Activated CD4-positive, alpha-beta memory T cell treated with anti-CD3 and anti-CD28 coated beads, Interleukin-2, amount 10 ng/mL, durations not matched to agents 7 days and 5 days (primary cell): ENCODE measurements at regions of chr22 and their contacts with region 1.

Region 1: DNA sequence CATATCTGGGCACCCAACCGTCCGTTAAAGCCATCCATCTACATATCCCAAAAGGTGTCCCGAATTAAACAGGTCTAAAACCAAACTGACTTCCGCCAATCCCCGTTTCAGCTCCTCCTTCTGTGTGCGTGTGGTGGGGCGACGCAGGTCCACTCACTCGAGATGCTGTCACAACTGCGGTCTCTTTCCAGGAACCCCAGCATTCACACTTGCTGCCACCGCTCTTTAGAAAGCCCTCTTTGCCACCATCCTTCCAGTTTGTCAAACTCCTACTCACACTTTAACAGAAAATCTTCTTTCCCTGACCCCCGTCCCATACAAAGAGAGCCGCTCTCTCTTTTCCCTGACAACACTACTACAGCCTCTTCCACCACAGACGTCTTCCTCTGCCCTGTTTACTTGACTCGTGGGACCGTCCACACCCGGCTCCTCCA is 467 bp downstream of the ESS2 start:
- DNase-seq: peak; percentile 58
- H3K4me3 Mint-ChIP-seq: peak overlapping the region; percentile 97
- H3K27ac Mint-ChIP-seq: peak overlapping the region; percentile 95
- H3K4me1 Mint-ChIP-seq: peaks cover 21% of the 10 kb centered on the region
- H3K27me3 Mint-ChIP-seq: peaks cover 23% of the 10 kb centered on the region

Region 2: GRCh38 chr22:19109198-19110067 is 34.6 kb before region 1 on chr22:
- CTCF ChIA-PET with region 1: interaction called, 8 read pairs
- POLR2A ChIA-PET with region 1: interaction called, 12 read pairs
- DNase-seq: peak; percentile 66
- H3K4me3 Mint-ChIP-seq: peak overlapping the region; percentile 50
- H3K27ac Mint-ChIP-seq: peak overlapping the region; percentile 81
- H3K4me1 Mint-ChIP-seq: peaks cover 50% of the 10 kb centered on the region
- H3K27me3 Mint-ChIP-seq: no peaks in the 10 kb centered on the region

Region 3: GRCh38 chr22:19115628-19116027 is 28.4 kb before region 1 on chr22:
- CTCF ChIA-PET with region 1: interaction called, 17 read pairs
- POLR2A ChIA-PET with region 1: interaction called, 12 read pairs
- DNase-seq: no peak
- H3K4me3 Mint-ChIP-seq: no peak overlapping the region
- H3K27ac Mint-ChIP-seq: no peak overlapping the region
- H3K4me1 Mint-ChIP-seq: peaks cover 52% of the 10 kb centered on the region
- H3K27me3 Mint-ChIP-seq: no peaks in the 10 kb centered on the region

Region 4: GRCh38 chr22:19122143-19122751 is 21.7 kb before region 1 on chr22 and contains the start of gene DGCR2:
- CTCF ChIA-PET with region 1: interaction called, 17 read pairs
- POLR2A ChIA-PET with region 1: interaction called, 30 read pairs
- DNase-seq: peak; percentile 97
- H3K4me3 Mint-ChIP-seq: peak within 1 kb of the TSS; percentile 79
- H3K27ac Mint-ChIP-seq: peak within 1 kb of the TSS; percentile 62
- H3K4me1 Mint-ChIP-seq: peaks cover 41% of the 10 kb centered on the region
- H3K27me3 Mint-ChIP-seq: no peaks in the 10 kb centered on the region
- total RNA-seq, gene DGCR2: 29.7 to 30.8 TPM

Region 5: DNA sequence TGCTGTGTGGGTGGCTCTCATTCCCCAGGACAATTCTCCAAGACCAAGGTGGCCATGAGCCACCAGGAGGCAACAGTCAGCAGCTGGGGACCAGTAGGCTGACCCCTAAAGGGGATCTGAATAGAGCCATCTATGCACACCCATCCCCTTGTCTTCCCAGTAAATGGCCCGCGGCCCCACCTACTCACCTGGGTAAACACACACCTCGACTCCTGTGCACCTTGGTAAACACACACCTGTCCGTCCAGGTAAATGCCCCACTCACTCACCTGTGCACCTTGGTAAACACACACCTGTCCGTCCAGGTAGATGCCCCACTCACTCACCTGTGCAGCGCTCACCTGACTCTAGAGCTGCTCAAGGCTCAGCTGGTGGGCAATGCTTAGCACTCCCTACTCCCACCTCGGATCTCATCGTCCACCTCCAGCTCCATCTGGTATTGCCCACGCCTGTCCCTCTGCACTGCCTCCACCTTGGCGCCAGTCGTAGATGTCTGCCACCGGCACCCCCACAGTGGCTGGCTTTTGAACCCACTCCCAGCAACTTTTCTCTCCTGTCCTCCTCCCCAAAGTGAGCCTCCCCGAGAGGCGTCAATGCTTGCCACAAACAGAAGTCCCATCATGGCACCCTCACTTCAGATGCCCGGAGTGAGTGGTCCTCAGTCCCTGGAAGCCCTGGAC is 24.4 kb after region 1 on chr22:
- CTCF ChIA-PET with region 1: no interaction called
- POLR2A ChIA-PET with region 1: interaction called, 10 read pairs
- DNase-seq: no peak
- H3K4me3 Mint-ChIP-seq: no peak overlapping the region
- H3K27ac Mint-ChIP-seq: no peak overlapping the region
- H3K4me1 Mint-ChIP-seq: peaks cover 31% of the 10 kb centered on the region
- H3K27me3 Mint-ChIP-seq: peaks cover 32% of the 10 kb centered on the region

Region 6: DNA sequence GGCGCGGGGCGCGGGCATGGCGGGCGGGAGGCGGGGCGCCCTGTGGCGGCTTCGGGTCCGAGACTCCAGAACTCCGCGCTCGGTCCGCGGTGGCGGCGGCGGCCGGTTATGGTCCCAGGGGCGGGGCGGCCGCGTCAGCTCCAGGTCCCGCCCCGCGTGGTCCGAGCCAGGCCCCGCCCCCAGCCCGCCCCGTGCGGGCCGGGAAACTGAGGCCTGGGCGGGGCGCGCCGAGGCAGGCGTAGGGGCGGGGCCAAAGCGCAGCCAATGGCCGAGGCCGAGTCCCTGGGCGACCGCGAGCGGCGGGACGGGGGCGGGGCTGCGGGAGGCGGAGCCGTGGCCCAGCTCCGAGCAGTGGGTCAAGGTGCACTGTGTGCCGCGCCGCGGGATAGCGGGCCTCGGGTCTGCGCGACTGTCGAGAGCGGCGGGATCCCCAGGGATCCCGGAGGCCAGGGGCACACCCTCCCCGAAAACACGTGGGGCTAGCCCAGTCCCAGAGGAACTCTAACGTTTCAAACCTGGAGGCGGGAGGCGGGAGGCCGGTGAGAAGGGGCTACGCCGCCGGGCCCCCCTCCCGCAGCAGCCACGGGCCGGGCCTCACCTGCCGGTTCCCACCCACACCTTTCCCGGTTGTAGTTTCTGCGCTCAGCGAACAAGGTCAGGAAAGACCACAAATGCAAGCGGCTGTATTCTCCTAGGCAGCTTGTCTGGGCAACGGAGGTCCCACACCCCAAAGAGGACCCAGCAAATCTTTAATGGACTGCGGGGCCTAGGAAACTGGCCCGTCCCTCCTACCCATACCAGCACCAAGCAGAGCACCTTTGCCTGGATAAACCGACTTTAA is 34.9 kb after region 1 on chr22 and contains the start of gene SLC25A1:
- CTCF ChIA-PET with region 1: interaction called, 12 read pairs
- POLR2A ChIA-PET with region 1: interaction called, 16 read pairs
- DNase-seq: peak; percentile 89
- H3K4me3 Mint-ChIP-seq: peak within 1 kb of the TSS; percentile 72
- H3K27ac Mint-ChIP-seq: peak within 1 kb of the TSS; percentile 21
- H3K4me1 Mint-ChIP-seq: peaks cover 32% of the 10 kb centered on the region
- H3K27me3 Mint-ChIP-seq: peaks cover 2% of the 10 kb centered on the region
- total RNA-seq, gene SLC25A1: 62.3 to 63.2 TPM

Region 7: GRCh38 chr22:19285831-19286230 is 141.8 kb after region 1 on chr22:
- CTCF ChIA-PET with region 1: no interaction called
- POLR2A ChIA-PET with region 1: no interaction called
- DNase-seq: no peak
- H3K4me3 Mint-ChIP-seq: no peak overlapping the region
- H3K27ac Mint-ChIP-seq: no peak overlapping the region
- H3K4me1 Mint-ChIP-seq: peaks cover 15% of the 10 kb centered on the region
- H3K27me3 Mint-ChIP-seq: peaks cover 34% of the 10 kb centered on the region

Region 8: DNA sequence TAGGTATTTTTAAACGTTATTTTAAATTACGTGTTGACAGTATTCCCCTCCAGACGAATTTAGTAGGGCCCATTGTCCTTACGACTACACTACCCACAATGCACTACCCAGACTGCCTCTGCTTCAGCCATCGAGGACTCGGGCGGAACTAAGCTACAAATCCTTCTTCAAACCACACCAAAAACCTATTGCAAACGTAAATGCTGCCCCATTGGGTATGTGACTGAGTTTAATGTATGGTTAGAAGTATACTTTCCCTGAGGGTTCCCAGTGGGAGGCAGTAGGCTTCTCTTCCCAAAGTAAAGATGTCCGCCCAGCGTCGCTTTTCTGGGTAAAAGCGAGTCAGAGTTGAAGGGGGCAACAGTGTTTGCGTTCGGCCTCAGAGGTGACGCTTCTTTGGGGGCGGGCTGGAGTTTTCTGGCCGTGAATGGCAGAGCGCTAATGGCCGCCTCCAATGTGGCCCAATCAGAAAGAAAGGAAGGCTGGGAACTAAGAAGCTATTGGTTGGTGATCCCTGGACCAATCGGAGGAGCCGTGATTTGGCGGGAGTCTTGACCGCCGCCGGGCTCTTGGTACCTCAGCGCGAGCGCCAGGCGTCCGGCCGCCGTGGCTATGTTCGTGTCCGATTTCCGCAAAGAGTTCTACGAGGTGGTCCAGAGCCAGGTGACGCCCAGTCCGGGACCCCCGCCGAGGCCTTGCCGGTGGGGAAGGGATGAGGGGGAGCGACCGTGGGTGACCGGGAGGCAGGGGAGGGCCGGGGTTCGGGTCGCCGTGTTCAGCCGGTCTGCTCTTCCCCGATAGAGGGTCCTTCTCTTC is 335.6 kb after region 1 on chr22 and contains the start of gene CDC45:
- CTCF ChIA-PET with region 1: interaction called, 16 read pairs
- POLR2A ChIA-PET with region 1: interaction called, 9 read pairs
- DNase-seq: peak; percentile 96
- H3K4me3 Mint-ChIP-seq: peak within 1 kb of the TSS; percentile 100
- H3K27ac Mint-ChIP-seq: peak within 1 kb of the TSS; percentile 95
- H3K4me1 Mint-ChIP-seq: peaks cover 46% of the 10 kb centered on the region
- H3K27me3 Mint-ChIP-seq: no peaks in the 10 kb centered on the region
- total RNA-seq, gene CDC45: 53.2 to 56.2 TPM